ENCODE measurements at regions of chr20 and their contacts with region 1.

Region 1: DNA sequence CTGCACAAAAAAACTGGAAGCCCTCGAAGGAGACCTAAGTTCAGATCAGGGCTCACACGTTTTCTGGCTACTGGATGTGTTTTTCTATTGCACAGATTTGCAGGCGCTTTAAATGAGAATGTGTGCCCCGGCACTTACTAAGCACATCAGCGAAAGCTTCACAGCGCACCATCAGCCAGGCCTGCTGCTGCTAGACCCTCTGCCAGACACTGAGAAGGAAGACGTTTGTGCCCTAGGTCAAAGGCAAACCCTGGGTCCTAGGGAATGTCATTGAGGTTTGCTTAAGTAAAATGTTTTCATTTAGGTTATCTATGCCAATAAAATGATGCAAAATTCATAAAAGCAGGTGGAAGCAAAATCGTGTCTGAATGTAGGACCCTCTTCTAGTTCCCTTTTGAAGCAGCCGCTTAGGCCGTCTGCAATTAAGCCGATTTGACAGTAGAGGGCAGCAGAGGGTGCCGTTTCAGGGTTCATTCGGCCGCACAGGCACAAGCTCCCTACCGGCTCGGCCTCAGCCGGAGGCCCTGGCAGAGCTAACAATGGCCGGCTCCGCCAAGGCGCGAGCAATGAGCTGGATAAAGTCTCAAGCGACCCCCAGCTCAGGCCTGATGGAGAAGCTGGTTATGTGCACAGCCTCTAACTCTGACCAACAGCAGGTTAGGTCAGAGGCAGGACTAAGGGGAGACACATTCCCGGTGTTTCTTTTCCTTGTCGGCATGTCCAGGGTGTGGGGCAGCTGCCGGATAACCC is 107.2 kb upstream of the FOXA2 start:
- DNase-seq: peak; percentile 82
- ATAC-seq: peak; percentile 92 to 93

Region 2: GRCh38 chr20:22815603-22816315 is 124.2 kb after region 1 on chr20:
- intact Hi-C with region 1: loop called in 1 of 2 experiments (anchors 10 kb)
- DNase-seq: no peak
- ATAC-seq: no peak

Region 3: DNA sequence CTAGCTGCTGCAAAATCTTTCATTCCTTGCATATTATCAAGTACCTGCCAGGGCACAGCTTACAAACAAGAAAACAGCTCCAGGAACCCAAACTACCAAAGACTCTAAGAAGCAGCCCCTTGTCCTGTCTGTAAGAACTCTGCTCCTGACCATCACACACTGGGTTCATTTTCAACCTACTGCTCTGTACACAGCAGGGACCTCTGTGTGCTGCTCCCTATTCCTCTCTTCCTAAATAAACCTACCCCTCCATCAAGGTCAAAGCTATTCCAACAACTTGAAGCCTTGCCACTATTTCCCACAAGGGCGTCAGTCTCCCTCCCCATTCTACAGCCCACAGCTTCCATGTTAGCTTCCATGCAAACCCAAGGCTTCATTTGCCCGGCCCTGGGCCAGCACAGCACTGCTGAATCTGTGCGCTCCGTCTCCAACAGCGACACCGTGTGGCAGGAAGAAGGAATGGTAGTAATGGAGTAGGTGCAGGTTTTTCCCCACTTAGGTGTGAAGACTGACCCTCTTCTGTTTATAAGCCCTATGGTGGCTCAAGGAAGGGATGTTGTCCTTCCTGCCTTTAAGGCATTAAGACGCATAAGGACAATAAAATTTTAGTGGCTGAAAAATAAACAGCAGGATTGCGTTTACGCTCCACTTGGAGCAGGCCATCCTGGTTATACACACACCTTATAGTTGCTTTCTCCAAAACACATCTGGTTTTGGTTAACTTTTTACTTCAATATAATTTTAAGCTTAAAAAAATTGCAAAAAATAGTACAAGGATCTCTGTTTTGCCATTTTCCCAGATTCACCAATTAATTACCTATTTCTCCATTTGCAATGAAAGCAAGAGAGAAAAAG is 543.9 kb after region 1 on chr20:
- intact Hi-C with region 1: loop called (anchors 5 to 10 kb)
- DNase-seq: peak; percentile 81
- ATAC-seq: peak; percentile 91 to 94